HEK293 (cell line): ENCODE measurements at regions of chr6 and their contacts with region 1.

Region 1: DNA sequence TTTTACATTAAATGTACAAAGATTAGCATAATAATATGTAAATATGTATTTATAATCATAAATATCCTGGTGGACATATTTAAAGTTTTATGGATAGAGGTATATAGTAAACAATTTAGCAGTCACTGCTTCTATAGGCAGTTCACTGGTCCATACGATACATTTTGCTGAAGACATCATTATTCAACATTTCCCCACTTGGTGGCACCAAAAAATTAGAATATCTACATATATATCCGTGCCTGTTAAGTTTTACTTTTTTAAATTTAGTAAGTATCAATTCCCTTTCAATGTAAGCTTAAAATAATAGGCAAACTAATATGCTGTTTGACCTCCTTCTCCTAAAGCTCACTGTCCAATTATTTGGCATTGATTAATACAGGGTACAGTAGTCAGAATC is 64.2 kb downstream of the LMBRD1 start:
- H3K4me3 ChIP-seq: no peak overlapping the region
- H3K27ac ChIP-seq: no peak overlapping the region
- H3K4me1 ChIP-seq: no peaks in the 10 kb centered on the region
- CTCF ChIP-seq: no peak

Region 2: GRCh38 chr6:69303382-69303781 is 429.3 kb before region 1 on chr6:
- CTCF ChIA-PET with region 1: no interaction called
- POLR2A ChIA-PET with region 1: no interaction called
- H3K4me3 ChIP-seq: no peak overlapping the region
- H3K27ac ChIP-seq: no peak overlapping the region
- H3K4me1 ChIP-seq: no peaks in the 10 kb centered on the region
- CTCF ChIP-seq: no peak

Region 3: DNA sequence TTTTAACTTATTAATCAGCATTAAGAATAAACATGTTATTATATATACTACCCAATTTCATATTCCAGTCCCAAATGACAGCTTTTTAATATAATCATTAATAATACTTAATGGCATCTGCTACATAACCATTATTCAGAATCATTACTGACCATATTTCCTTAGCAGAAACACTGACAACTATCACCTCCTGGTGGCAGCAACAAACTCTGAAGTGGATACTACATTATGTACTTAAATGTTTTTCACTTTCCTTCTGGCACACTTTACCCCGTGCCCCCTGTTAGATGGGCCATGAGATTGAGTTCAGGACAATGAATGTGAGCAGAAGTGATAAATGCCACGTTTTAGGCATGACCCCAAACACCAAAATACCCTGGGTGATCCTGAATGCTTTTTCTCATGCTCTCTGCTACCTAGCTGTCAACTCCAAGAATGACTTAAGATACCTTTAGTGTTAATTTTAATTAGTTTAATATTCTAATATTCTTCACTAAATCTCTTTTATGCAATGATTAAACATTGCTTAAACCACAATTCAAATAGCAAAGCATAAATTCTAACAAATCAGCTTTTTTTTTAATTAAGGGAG is 12.9 kb before region 1 on chr6:
- CTCF ChIA-PET with region 1: interaction called, 10 read pairs
- POLR2A ChIA-PET with region 1: no interaction called
- H3K4me3 ChIP-seq: no peak overlapping the region
- H3K27ac ChIP-seq: no peak overlapping the region
- H3K4me1 ChIP-seq: no peaks in the 10 kb centered on the region
- CTCF ChIP-seq: no peak

Region 4: GRCh38 chr6:69848552-69848951 is 115.9 kb after region 1 on chr6:
- CTCF ChIA-PET with region 1: no interaction called
- POLR2A ChIA-PET with region 1: no interaction called
- H3K4me3 ChIP-seq: no peak overlapping the region
- H3K27ac ChIP-seq: no peak overlapping the region
- H3K4me1 ChIP-seq: 0 out of 2 replicates have a peak, but pooled peaks cover 2% of the 10 kb centered on the region
- CTCF ChIP-seq: no peak